MCF 10A (cell line): ENCODE measurements at regions of chr12 and their contacts with region 1.

Region 1: DNA sequence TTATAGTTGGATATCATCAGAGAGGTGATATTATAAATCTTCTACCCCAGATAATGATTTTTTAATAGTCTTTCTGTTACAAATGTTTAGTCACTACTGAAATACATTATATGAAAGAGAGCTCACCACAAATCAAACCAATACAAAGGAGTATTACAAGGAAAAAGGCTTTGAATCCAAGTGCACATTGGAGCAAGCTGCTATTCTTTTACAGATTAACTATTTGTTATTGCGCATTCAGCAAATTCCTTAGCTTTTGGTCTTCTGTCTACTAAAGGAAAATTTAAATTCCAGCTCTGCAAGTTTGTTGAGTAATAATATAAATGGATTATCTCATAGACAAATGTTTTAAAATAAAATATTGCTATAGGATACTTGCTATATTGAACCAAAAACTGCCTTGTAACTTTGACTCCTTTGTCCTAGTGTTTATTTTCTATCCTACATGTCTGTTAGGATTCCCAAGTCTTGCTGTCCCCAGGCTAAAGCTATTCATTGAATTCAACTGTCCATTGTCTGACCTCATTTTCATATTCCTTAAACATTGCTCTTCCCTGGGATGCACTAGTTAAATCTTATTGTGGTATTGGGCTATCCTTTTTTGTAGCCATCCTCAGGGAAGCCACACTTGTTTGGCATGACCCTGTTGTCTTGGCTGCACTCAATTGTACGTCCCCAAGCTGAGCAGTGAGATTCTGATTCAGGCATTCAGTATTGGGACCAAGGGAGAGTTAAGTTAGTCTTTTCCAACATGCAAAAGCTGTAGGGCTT is 41.5 kb downstream of the PDE3A start:
- DNase-seq: no peak
- H3K4me3 Mint-ChIP-seq: no peak overlapping the region
- H3K27ac Mint-ChIP-seq: no peak overlapping the region
- H3K4me1 Mint-ChIP-seq: no peaks in the 10 kb centered on the region
- H3K27me3 Mint-ChIP-seq: peaks cover 87% of the 10 kb centered on the region
- CTCF ChIP-seq: no peak

Region 2: GRCh38 chr12:20383612-20384011 is 26.2 kb before region 1 on chr12:
- CTCF ChIA-PET with region 1: no interaction called
- POLR2A ChIA-PET with region 1: no interaction called
- intact Hi-C with region 1: no loop called
- DNase-seq: no peak
- H3K4me3 Mint-ChIP-seq: no peak overlapping the region
- H3K27ac Mint-ChIP-seq: no peak overlapping the region
- H3K4me1 Mint-ChIP-seq: no peaks in the 10 kb centered on the region
- H3K27me3 Mint-ChIP-seq: peaks cover 53% of the 10 kb centered on the region
- CTCF ChIP-seq: no peak

Region 3: DNA sequence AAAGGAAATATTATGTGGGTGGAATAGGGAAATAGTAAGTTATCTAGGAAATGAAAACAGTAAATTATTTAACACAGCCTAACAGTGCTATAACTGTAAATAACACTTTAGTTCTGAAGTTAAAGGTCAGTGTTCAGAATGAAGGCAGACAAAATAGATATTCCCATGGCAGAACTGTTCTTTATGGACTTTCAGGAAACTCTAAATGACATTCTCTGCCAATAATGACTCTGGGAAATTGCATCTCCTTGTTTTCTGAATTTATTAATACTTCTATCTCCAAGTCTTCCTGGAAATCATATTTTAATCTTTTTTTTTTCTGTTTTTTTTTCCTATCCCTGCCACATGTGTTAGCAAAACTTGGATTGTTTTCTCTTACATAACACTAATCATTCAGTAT is 60.0 kb after region 1 on chr12:
- CTCF ChIA-PET with region 1: no interaction called
- POLR2A ChIA-PET with region 1: no interaction called
- intact Hi-C with region 1: loop called (anchors 2 kb)
- DNase-seq: no peak
- H3K4me3 Mint-ChIP-seq: no peak overlapping the region
- H3K27ac Mint-ChIP-seq: no peak overlapping the region
- H3K4me1 Mint-ChIP-seq: no peaks in the 10 kb centered on the region
- H3K27me3 Mint-ChIP-seq: peaks cover 84% of the 10 kb centered on the region
- CTCF ChIP-seq: no peak